ENCODE measurements at regions of chr9 and their contacts with region 1.

Region 1: GRCh38 chr9:109817846-109818472 is 38.0 kb downstream of the PALM2AKAP2 start:
- DNase-seq: peak; percentile 60
- H3K4me3 ChIP-seq: no peak overlapping the region
- H3K27ac ChIP-seq: peak overlapping the region in 2 of 4 donors; percentile 5 to 16
- H3K4me1 ChIP-seq: peaks cover 0 to 4% (median 0%) of the 10 kb centered on the region in 4 donors
- H3K27me3 ChIP-seq: no peaks in the 10 kb centered on the region
- CTCF ChIP-seq: peak; percentile 85 to 88 (median 87)
- EP300 ChIP-seq: no peak
- POLR2A ChIP-seq: no peak

Region 2: DNA sequence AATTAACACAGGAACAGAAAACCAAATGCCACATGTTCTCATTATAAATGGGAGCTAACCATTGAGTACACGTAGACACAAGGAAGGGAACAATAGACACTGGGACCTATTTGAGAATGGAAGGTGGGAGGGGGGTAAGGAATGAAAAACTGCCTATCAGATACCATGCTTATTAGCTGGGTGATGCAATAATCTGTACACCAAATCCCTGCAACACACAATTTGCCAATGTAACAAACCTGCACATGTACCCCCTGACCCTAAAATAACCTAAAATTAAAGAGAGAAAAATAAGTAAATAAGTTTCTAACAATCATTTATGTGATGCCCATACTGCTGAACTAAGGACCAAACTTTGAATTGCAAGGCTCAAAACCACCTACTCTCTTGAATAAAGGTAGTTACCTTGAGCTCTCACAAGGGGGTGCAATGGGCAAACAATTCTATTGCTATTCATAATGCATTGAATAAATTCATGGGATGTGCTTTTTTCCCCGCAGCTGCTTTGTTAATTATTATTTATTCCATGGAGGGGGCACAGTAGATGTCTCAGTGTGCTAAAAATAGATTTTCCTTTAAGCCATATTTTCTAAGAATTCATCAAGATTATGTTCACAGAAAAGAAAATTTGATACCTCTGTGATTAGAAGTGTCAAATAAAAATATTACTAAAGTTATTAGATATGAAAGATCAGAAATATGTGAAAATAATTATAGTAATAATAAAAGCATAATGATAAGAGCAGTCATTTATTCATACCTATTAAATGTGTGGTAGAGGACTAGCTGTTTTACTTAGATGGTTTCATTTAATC is 243.7 kb before region 1 on chr9:
- in situ Hi-C with region 1: loop called in 3 of 4 experiments (anchors 5 to 25 kb)
- intact Hi-C with region 1: loop called (anchors 5 kb)
- DNase-seq: no peak
- H3K4me3 ChIP-seq: no peak overlapping the region
- H3K27ac ChIP-seq: no peak overlapping the region
- H3K4me1 ChIP-seq: no peaks in the 10 kb centered on the region
- H3K27me3 ChIP-seq: no peaks in the 10 kb centered on the region
- CTCF ChIP-seq: peak; percentile 56 to 75 (median 63)
- EP300 ChIP-seq: no peak
- POLR2A ChIP-seq: no peak

Region 3: GRCh38 chr9:109579191-109579948 is 238.6 kb before region 1 on chr9:
- in situ Hi-C with region 1: loop called in 3 of 4 experiments (anchors 5 to 25 kb)
- intact Hi-C with region 1: loop called (anchors 5 kb)
- DNase-seq: no peak
- H3K4me3 ChIP-seq: no peak overlapping the region
- H3K27ac ChIP-seq: no peak overlapping the region
- H3K4me1 ChIP-seq: no peaks in the 10 kb centered on the region
- H3K27me3 ChIP-seq: no peaks in the 10 kb centered on the region
- CTCF ChIP-seq: no peak
- EP300 ChIP-seq: no peak
- POLR2A ChIP-seq: no peak

Region 4: GRCh38 chr9:109590945-109591344 is 227.0 kb before region 1 on chr9:
- in situ Hi-C with region 1: loop called in 1 of 4 experiments (anchors 25 kb)
- intact Hi-C with region 1: no loop called
- DNase-seq: no peak
- H3K4me3 ChIP-seq: no peak overlapping the region
- H3K27ac ChIP-seq: no peak overlapping the region
- H3K4me1 ChIP-seq: no peaks in the 10 kb centered on the region
- H3K27me3 ChIP-seq: no peaks in the 10 kb centered on the region
- CTCF ChIP-seq: no peak
- EP300 ChIP-seq: no peak
- POLR2A ChIP-seq: no peak

Measured in transverse colon (tissue), 4 donors.